ENCODE measurements at regions of chr2 and their contacts with region 1.

Region 1: DNA sequence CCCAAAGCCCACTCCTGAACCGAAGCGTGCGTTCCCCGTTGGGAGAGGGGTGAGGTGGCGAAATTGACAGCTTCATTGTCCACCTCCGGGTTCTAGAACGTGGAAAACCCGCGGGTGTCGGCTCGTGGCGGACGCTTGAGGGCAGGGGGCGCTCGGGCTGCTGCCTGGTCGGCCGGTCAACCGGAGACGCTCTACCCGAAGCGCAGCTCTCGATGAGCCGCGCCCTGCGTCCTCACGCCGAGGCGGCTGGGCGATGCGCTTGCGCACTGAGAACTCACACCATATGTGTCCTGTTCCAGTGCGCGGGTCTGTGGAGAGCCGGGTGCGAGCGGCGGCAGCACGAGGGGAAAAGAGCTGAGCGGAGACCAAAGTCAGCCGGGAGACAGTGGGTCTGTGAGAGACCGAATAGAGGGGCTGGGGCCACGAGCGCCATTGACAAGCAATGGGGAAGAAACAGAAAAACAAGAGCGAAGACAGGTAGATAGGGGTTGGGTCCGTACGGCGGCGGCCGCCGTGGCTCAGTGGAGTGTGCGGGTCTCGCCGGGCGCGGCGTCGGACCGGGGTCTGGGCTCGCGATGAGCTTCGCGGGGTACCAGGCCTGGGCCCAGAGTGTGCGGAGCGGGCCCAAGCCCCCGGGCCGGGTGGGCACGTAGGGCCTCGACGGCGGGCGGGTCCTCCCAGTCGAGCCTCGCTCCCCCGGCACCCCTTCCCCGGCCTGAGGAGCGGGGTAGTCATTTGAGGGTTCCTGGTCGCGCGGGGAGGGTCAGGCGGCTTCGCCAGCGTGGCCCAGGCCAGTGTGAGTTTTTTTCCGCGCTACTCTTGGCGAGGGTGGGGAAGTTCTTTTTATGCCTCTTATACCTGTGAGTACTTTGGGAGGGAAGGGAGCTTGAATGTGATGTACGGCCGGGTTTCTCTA is at the start of gene EIF5B:
- DNase-seq: peak; percentile 78 to 92 (median 84)
- ATAC-seq: peak; percentile 78
- H3K4me3 ChIP-seq: peak within 1 kb of the TSS; percentile 85
- H3K4me3 Mint-ChIP-seq: no peak within 1 kb of the TSS
- H3K27ac ChIP-seq: peak within 1 kb of the TSS; percentile 78
- H3K27ac Mint-ChIP-seq: no peak within 1 kb of the TSS
- H3K4me1 ChIP-seq: peaks cover 20 to 25% of the 10 kb centered on the region in 2 donors
- H3K4me1 Mint-ChIP-seq: peaks cover 20 to 49% (median 45%) of the 10 kb centered on the region in 7 donors
- H3K27me3 ChIP-seq: no peaks in the 10 kb centered on the region
- H3K27me3 Mint-ChIP-seq: no peaks in the 10 kb centered on the region
- total RNA-seq, gene EIF5B: 28.0 to 49.0 (median 37.6) TPM

Region 2: GRCh38 chr2:97645695-97646629 is 1691.4 kb before region 1 on chr2 and contains the start of gene COX5B:
- CTCF ChIA-PET with region 1: no interaction called
- POLR2A ChIA-PET with region 1: no interaction called
- intact Hi-C with region 1: loop called (anchors 5 kb)
- DNase-seq: peak; percentile 91 to 99 (median 98)
- ATAC-seq: peak; percentile 99
- H3K4me3 ChIP-seq: peak within 1 kb of the TSS; percentile 99
- H3K4me3 Mint-ChIP-seq: peak within 1 kb of the TSS; percentile 86 to 97 (median 94)
- H3K27ac ChIP-seq: peak within 1 kb of the TSS; percentile 97
- H3K27ac Mint-ChIP-seq: peak within 1 kb of the TSS; percentile 91 to 99 (median 98)
- H3K4me1 ChIP-seq: peaks cover 15 to 17% of the 10 kb centered on the region in 2 donors
- H3K4me1 Mint-ChIP-seq: peaks cover 15 to 32% (median 26%) of the 10 kb centered on the region in 7 donors
- H3K27me3 ChIP-seq: no peaks in the 10 kb centered on the region
- H3K27me3 Mint-ChIP-seq: no peaks in the 10 kb centered on the region
- total RNA-seq, gene COX5B: 111 to 213 (median 122) TPM

Region 3: GRCh38 chr2:97995734-97996624 is 1341.4 kb before region 1 on chr2 and contains the start of gene TMEM131:
- CTCF ChIA-PET with region 1: no interaction called
- POLR2A ChIA-PET with region 1: no interaction called
- intact Hi-C with region 1: loop called in 1 of 2 experiments (anchors 2 kb)
- DNase-seq: peak; percentile 89 to 98 (median 95)
- ATAC-seq: peak; percentile 93
- H3K4me3 ChIP-seq: peak within 1 kb of the TSS; percentile 90
- H3K4me3 Mint-ChIP-seq: peak within 1 kb of the TSS; percentile 85 to 98 (median 96)
- H3K27ac ChIP-seq: peak within 1 kb of the TSS; percentile 96
- H3K27ac Mint-ChIP-seq: peak within 1 kb of the TSS; percentile 86 to 95 (median 93)
- H3K4me1 ChIP-seq: peaks cover 14 to 17% of the 10 kb centered on the region in 2 donors
- H3K4me1 Mint-ChIP-seq: peaks cover 20 to 40% (median 38%) of the 10 kb centered on the region in 7 donors
- H3K27me3 ChIP-seq: no peaks in the 10 kb centered on the region
- H3K27me3 Mint-ChIP-seq: peaks cover 0 to 4% (median 0%) of the 10 kb centered on the region in 5 donors
- total RNA-seq, gene TMEM131: 39.7 to 46.4 (median 43.6) TPM

Region 4: GRCh38 chr2:98731041-98731893 is 606.1 kb before region 1 on chr2 and contains the start of gene MGAT4A:
- CTCF ChIA-PET with region 1: no interaction called
- POLR2A ChIA-PET with region 1: no interaction called
- intact Hi-C with region 1: loop called in 1 of 2 experiments (anchors 10 kb)
- DNase-seq: peak; percentile 74 to 85 (median 82)
- ATAC-seq: peak; percentile 88
- H3K4me3 ChIP-seq: peak within 1 kb of the TSS; percentile 79
- H3K4me3 Mint-ChIP-seq: peak within 1 kb of the TSS; percentile 89 to 98 (median 94)
- H3K27ac ChIP-seq: peak within 1 kb of the TSS; percentile 98
- H3K27ac Mint-ChIP-seq: peak within 1 kb of the TSS; percentile 90 to 98 (median 96)
- H3K4me1 ChIP-seq: peaks cover 48% of the 10 kb centered on the region in 2 donors
- H3K4me1 Mint-ChIP-seq: peaks cover 27 to 75% (median 64%) of the 10 kb centered on the region in 7 donors
- H3K27me3 ChIP-seq: no peaks in the 10 kb centered on the region
- H3K27me3 Mint-ChIP-seq: no peaks in the 10 kb centered on the region
- total RNA-seq, gene MGAT4A: 125 to 308 (median 240) TPM

Region 5: GRCh38 chr2:98952966-98953365 is 384.4 kb before region 1 on chr2:
- CTCF ChIA-PET with region 1: no interaction called
- POLR2A ChIA-PET with region 1: no interaction called
- intact Hi-C with region 1: no loop called
- DNase-seq: no peak
- ATAC-seq: no peak
- H3K4me3 ChIP-seq: no peak overlapping the region
- H3K4me3 Mint-ChIP-seq: no peak overlapping the region
- H3K27ac ChIP-seq: no peak overlapping the region
- H3K27ac Mint-ChIP-seq: no peak overlapping the region
- H3K4me1 ChIP-seq: no peaks in the 10 kb centered on the region
- H3K4me1 Mint-ChIP-seq: no peaks in the 10 kb centered on the region
- H3K27me3 ChIP-seq: no peaks in the 10 kb centered on the region
- H3K27me3 Mint-ChIP-seq: peaks cover 16 to 36% (median 29%) of the 10 kb centered on the region in 5 donors

Region 6: DNA sequence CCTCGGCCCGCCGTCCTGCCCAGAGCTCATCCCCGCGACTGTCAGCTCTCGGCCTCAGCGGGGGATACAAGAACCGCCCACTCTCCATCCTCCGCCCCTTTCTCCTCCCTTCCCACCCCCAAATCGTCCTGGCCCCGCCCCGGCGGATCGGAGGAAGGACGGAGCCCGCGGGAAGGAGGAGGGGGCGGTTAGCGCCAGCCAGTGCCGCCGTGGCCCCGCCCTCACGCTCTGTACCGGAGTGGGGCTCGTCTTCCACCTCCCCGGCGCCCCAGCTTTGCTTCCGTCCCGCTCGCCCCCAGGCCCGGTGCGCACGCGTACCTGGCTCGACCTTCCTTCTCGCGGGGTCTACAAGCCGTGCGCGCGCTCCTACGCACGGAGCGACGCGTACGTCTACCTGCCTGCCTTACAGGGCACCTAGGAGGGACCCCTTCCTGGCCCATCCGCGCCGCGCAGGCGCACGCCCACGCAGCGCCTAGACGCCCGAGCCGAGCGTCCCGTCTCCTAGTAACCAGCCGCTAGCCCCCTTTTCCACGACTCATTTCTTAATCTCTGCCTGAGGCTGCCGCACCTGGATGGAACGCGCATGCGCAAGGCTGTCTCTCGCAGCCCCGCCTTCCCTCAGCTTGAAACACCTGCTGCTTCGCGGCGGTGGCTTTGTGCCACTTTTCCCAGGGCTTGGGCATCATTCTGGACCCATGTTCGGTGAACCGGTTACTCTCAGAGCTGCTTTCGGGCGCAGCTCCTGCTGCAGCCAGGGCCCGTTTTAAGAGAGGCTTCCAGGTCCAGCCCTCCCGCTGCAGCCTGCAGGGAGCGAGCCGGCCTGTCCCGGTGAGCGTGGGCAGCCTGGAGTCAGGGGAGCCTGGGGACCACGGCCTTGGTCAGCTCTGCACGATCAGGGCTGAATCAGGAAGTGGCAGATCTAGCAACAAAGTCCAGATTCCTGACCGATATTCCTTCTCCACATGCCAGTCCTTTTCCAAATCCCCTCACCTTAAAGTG is 196.0 kb before region 1 on chr2 and contains the start of gene C2orf15:
- CTCF ChIA-PET with region 1: no interaction called
- POLR2A ChIA-PET with region 1: interaction called, 11 read pairs
- intact Hi-C with region 1: loop called (anchors 1 kb)
- DNase-seq: peak; percentile 89 to 98 (median 96)
- ATAC-seq: peak; percentile 95
- H3K4me3 ChIP-seq: peak within 1 kb of the TSS; percentile 97
- H3K4me3 Mint-ChIP-seq: peak within 1 kb of the TSS; percentile 90 to 99 (median 97)
- H3K27ac ChIP-seq: peak within 1 kb of the TSS; percentile 82
- H3K27ac Mint-ChIP-seq: peak within 1 kb of the TSS; percentile 92 to 99 (median 98)
- H3K4me1 ChIP-seq: peaks cover 13% of the 10 kb centered on the region in 2 donors
- H3K4me1 Mint-ChIP-seq: peaks cover 0 to 31% (median 25%) of the 10 kb centered on the region in 7 donors
- H3K27me3 ChIP-seq: no peaks in the 10 kb centered on the region
- H3K27me3 Mint-ChIP-seq: peaks cover 0 to 41% (median 0%) of the 10 kb centered on the region in 5 donors
- total RNA-seq, gene C2orf15: 0.48 to 3.8 (median 3.1) TPM

Region 7: DNA sequence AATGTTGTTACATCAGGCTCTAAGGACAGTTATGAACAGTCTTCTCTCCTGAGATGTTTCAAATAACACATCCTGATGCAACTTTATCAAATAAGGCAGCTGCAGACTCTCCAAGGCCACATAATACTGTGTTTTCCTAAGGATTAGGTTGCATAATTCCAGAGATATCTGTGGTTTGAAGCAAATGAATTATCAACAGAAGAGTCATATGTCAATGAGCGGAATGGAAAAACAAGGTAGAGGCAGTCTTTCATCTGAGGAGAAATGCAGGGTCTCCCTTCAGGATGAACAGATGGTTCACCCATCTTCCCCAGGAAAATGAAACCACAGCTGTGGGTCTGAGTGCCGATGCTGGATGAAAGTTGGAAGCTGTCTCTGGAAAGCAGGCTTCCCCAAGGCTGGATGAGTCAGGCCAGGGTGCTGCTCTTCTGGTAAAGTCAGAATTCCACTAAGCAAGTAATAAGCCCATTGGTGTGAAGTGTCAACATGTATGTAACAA is 58.5 kb before region 1 on chr2:
- CTCF ChIA-PET with region 1: no interaction called
- POLR2A ChIA-PET with region 1: no interaction called
- intact Hi-C with region 1: no loop called
- DNase-seq: no peak
- ATAC-seq: no peak
- H3K4me3 ChIP-seq: no peak overlapping the region
- H3K4me3 Mint-ChIP-seq: no peak overlapping the region
- H3K27ac ChIP-seq: no peak overlapping the region
- H3K27ac Mint-ChIP-seq: no peak overlapping the region
- H3K4me1 ChIP-seq: no peaks in the 10 kb centered on the region
- H3K4me1 Mint-ChIP-seq: no peaks in the 10 kb centered on the region
- H3K27me3 ChIP-seq: no peaks in the 10 kb centered on the region
- H3K27me3 Mint-ChIP-seq: no peaks in the 10 kb centered on the region

Region 8: DNA sequence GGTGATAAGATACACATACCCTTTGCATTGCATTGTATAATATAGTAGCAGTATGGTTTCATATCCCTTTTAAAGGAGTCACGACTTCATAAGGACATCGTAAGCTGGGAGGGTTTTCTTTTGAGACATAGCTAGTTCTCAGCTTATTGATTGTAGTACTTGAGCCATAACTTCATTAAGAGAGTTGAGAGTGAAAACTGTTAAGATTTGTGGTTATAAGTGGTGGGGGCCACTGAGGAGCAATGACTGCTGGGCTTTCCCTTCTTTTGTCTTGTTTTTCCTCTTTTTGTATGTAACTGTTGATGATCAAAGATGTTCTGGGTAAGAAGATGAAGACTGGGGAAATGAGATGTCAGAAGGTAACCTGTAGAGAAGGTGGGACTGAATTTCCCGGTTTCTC is 10.8 kb after region 1 on chr2:
- CTCF ChIA-PET with region 1: interaction called, 6 read pairs
- POLR2A ChIA-PET with region 1: interaction called, 7 read pairs
- intact Hi-C with region 1: loop called in 1 of 2 experiments (anchors 1 kb)
- DNase-seq: peak in 1 of 9 donors; percentile 7
- ATAC-seq: peak; percentile 65
- H3K4me3 ChIP-seq: no peak overlapping the region
- H3K4me3 Mint-ChIP-seq: peak overlapping the region in 8 of 10 donors; percentile 1 to 49 (median 28)
- H3K27ac ChIP-seq: peak overlapping the region; percentile 22
- H3K27ac Mint-ChIP-seq: peak overlapping the region in 8 of 9 donors; percentile 36 to 81 (median 66)
- H3K4me1 ChIP-seq: peaks cover 8 to 19% of the 10 kb centered on the region in 2 donors
- H3K4me1 Mint-ChIP-seq: peaks cover 44 to 81% (median 71%) of the 10 kb centered on the region in 7 donors
- H3K27me3 ChIP-seq: no peaks in the 10 kb centered on the region
- H3K27me3 Mint-ChIP-seq: no peaks in the 10 kb centered on the region

Region 9: GRCh38 chr2:101001691-101002561 is 1664.6 kb after region 1 on chr2 and contains the start of gene RPL31:
- CTCF ChIA-PET with region 1: no interaction called
- POLR2A ChIA-PET with region 1: no interaction called
- intact Hi-C with region 1: loop called in 1 of 2 experiments (anchors 5 kb)
- DNase-seq: peak; percentile 86 to 97 (median 95)
- ATAC-seq: peak; percentile 99
- H3K4me3 ChIP-seq: peak within 1 kb of the TSS; percentile 93
- H3K4me3 Mint-ChIP-seq: peak within 1 kb of the TSS; percentile 91 to 99 (median 95)
- H3K27ac ChIP-seq: peak within 1 kb of the TSS; percentile 86
- H3K27ac Mint-ChIP-seq: peak within 1 kb of the TSS; percentile 88 to 99 (median 98)
- H3K4me1 ChIP-seq: peaks cover 16 to 18% of the 10 kb centered on the region in 2 donors
- H3K4me1 Mint-ChIP-seq: peaks cover 32 to 48% (median 44%) of the 10 kb centered on the region in 7 donors
- H3K27me3 ChIP-seq: no peaks in the 10 kb centered on the region
- H3K27me3 Mint-ChIP-seq: peaks cover 0 to 5% (median 0%) of the 10 kb centered on the region in 5 donors
- total RNA-seq, gene RPL31: 1,182 to 2,835 (median 2,548) TPM

Measured in naive thymus-derived CD4-positive, alpha-beta T cell (primary cell).